H1 (cell line): ENCODE measurements at regions of chr21 and their contacts with region 1.

Region 1: DNA sequence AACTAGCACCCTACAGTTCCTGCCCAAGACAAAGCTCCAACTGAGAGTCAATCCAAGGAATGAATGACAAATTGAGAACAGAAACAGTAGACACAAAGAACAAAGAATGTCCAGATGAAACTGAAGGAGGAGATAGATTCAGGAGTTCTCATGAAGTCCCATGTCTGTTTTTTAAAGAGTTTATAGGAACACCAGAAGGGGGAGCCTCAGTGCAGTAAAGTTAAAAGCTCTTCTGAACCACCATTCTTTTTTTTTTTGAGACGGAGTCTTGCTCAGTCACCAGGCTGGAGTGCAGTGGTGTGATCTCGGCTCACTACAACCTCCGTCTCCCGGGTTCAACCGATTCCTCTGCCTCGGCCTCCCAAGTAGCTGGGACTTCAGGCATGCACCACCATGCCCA is 323.6 kb downstream of the MRPL39 start:
- DNase-seq: no peak
- H3K4me3 ChIP-seq: no peak overlapping the region
- H3K27ac ChIP-seq: no peak overlapping the region
- H3K4me1 ChIP-seq: peaks cover 0 to 3% (median 0%) of the 10 kb centered on the region in 4 experiments; a peak in 1 of 7 replicates
- H3K27me3 ChIP-seq: no peaks in the 10 kb centered on the region
- CTCF ChIP-seq: peak in 2 of 3 experiments; percentile 20 to 40; a peak in 2 of 4 replicates
- EP300 ChIP-seq: no peak
- POLR2A ChIP-seq: no peak
- RAD21 ChIP-seq: peak; percentile 55 to 58; a peak in 3 of 4 replicates

Region 2: GRCh38 chr21:25246546-25246945 is 37.2 kb before region 1 on chr21:
- CTCF ChIA-PET with region 1: interaction called, 12 read pairs
- POLR2A ChIA-PET with region 1: no interaction called
- DNase-seq: no peak
- H3K4me3 ChIP-seq: no peak overlapping the region
- H3K27ac ChIP-seq: no peak overlapping the region
- H3K4me1 ChIP-seq: no peaks in the 10 kb centered on the region
- H3K27me3 ChIP-seq: no peaks in the 10 kb centered on the region
- CTCF ChIP-seq: no peak
- EP300 ChIP-seq: no peak
- POLR2A ChIP-seq: no peak
- RAD21 ChIP-seq: no peak